PC-9 (cell line): ENCODE measurements at regions of chr19 and their contacts with region 1.

Region 1: DNA sequence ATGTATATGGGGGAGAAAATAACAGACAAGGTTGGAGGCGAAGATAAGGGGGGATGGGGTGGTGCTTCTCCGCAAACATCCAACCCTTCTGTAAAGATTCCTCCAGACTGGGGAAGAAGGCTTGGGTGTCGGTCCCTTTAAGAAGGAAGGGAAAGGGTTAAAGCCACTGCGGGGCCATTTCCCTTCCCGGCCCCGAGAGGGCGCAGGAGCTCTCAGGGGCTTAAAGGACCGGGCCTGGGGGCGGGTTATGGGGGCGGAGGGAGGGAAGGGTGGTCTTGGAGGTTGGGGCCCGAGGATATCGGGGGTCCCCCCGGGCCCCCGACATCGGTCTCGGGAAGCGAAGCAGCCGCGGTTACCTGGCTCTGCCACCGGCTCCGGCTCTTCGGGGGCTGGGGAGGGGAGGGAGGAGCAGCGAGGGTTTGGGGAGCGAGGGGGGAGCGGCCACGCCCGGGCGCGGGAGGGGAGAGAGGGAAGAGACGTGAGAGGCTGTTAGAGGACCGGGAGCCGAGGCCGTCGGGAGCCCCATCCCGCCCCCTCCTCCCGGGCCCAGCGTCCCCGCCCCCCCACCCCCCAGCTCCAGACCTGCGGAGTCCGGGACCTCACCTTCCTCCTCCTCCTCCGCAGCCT is 2.8 kb downstream of the TNNT1 start:
- DNase-seq: peak; percentile 59 to 83
- H3K4me3 ChIP-seq: peak overlapping the region; percentile 67
- H3K27ac ChIP-seq: no peak overlapping the region
- H3K4me1 ChIP-seq: peaks cover 20% of the 10 kb centered on the region; the same call in 1 of the 2 replicates
- H3K27me3 ChIP-seq: peaks cover 4% of the 10 kb centered on the region; the same call in 1 of the 2 replicates
- CTCF ChIP-seq: peak; percentile 98

Region 2: GRCh38 chr19:55160128-55160985 is 14.2 kb after region 1 on chr19:
- CTCF ChIA-PET with region 1: interaction called, 47 read pairs
- POLR2A ChIA-PET with region 1: interaction called, 4 read pairs
- intact Hi-C with region 1: loop called (anchors 1 kb)
- DNase-seq: peak; percentile 89 to 98
- H3K4me3 ChIP-seq: no peak overlapping the region
- H3K27ac ChIP-seq: no peak overlapping the region
- H3K4me1 ChIP-seq: peaks cover 21% of the 10 kb centered on the region
- H3K27me3 ChIP-seq: no peaks in the 10 kb centered on the region
- CTCF ChIP-seq: peak; percentile 98

Region 3: DNA sequence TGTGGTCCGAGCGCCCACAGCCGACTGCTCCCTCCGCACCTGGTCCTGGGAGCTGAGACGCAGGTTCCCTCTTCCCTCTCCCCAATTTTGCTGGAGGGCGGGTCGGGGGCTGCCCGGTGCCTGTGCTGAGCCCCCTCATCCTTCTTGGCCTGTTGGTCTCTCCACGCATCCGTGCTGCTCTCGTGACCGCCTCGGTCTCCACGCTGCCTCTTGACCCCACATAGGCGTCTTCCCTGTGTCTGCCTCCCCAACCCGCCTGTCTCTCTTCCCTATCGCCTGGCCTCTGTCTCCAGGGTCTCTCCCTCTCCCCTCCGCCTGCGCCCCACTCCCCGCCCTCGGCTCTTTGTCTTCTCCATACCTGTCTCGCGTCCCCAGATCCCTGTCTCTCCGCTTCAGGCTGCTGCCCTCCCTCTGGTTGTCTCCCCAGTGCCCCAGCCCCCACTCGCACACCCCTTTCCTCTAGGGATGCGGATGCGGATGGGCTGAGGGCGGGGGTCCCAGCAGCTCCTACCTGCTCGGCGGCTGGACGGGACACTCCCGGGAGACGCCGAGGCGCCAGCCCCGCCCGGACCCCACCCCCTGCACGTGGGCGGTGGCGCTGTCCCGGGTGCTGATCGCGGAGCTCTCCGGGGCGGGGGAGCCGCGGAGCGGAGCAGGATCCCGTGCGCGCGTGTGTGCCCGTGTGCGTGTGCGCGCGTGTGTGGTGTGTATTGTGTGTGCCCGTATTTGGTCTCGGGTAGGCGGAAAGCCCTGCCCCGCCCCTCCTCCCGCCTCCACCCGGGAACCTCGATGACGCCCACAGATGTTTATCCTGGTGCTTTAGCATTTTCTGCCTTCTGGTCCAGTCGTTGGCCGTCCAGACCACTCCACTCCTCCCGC is 33.7 kb after region 1 on chr19 and contains the start of gene SYT5:
- CTCF ChIA-PET with region 1: no interaction called
- POLR2A ChIA-PET with region 1: no interaction called
- intact Hi-C with region 1: no loop called
- DNase-seq: no peak
- H3K4me3 ChIP-seq: peak within 1 kb of the TSS; percentile 34; the same call in 1 of the 2 replicates
- H3K27ac ChIP-seq: no peak within 1 kb of the TSS
- H3K4me1 ChIP-seq: no peaks in the 10 kb centered on the region
- H3K27me3 ChIP-seq: no peaks in the 10 kb centered on the region
- CTCF ChIP-seq: no peak
- total RNA-seq, gene SYT5: 1.3 and 2.8 TPM in 2 replicates

Region 4: GRCh38 chr19:55216461-55217198 is 70.4 kb after region 1 on chr19:
- CTCF ChIA-PET with region 1: no interaction called
- POLR2A ChIA-PET with region 1: interaction called, 19 read pairs
- intact Hi-C with region 1: loop called (anchors 1 kb)
- DNase-seq: peak; percentile 95 to 100
- H3K4me3 ChIP-seq: peak overlapping the region; percentile 61
- H3K27ac ChIP-seq: peak overlapping the region; percentile 92
- H3K4me1 ChIP-seq: peaks cover 15% of the 10 kb centered on the region
- H3K27me3 ChIP-seq: no peaks in the 10 kb centered on the region
- CTCF ChIP-seq: no peak

Region 5: GRCh38 chr19:55227241-55228014 is 81.2 kb after region 1 on chr19:
- CTCF ChIA-PET with region 1: no interaction called
- POLR2A ChIA-PET with region 1: no interaction called
- intact Hi-C with region 1: no loop called
- DNase-seq: no peak
- H3K4me3 ChIP-seq: no peak overlapping the region
- H3K27ac ChIP-seq: no peak overlapping the region
- H3K4me1 ChIP-seq: no peaks in the 10 kb centered on the region
- H3K27me3 ChIP-seq: no peaks in the 10 kb centered on the region
- CTCF ChIP-seq: no peak

Region 6: GRCh38 chr19:55289117-55289796 is 143.1 kb after region 1 on chr19:
- CTCF ChIA-PET with region 1: interaction called, 4 read pairs
- POLR2A ChIA-PET with region 1: interaction called, 10 read pairs
- intact Hi-C with region 1: no loop called
- DNase-seq: no peak
- H3K4me3 ChIP-seq: no peak overlapping the region
- H3K27ac ChIP-seq: no peak overlapping the region
- H3K4me1 ChIP-seq: no peaks in the 10 kb centered on the region
- H3K27me3 ChIP-seq: no peaks in the 10 kb centered on the region
- CTCF ChIP-seq: no peak

Region 7: DNA sequence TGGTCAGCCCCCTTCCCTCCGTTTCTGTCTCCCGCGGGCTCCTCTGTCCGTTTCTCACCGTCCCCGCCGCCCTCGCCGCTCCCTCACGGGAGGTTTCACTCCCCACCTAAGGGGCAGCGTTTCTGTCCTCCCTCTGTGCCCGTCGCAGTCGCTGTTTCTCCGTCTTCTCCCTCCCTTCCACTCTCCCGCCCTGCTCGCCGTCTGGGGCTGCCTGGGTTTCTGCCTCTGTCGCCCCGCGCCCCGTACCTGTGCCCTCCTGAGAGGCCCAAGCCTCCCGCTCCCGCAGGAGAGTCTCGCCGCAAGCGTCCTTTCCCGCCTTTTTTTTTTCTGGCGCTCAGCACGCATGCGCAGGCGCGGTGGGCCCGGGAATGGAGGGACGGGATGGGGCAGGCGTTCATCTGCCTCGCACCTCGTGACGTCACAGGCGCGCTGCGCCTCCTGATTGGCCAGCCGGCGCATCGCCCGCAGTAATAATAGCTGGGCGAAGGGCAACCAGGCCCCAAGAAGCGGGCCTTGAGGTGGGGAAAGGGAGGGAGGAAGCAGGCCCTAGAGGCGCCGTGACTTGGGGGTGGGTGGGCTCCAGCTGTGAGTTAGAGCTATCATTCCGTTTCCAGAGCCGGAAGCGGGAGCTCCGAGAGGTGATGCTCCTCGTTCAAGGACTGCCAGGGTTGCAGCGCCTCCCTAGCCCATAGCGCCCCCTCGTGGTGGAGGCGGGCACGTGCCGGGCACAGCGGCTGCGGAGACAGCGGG is 357.5 kb after region 1 on chr19:
- CTCF ChIA-PET with region 1: interaction called, 6 read pairs
- POLR2A ChIA-PET with region 1: no interaction called
- intact Hi-C with region 1: loop called (anchors 1 kb)
- DNase-seq: peak; percentile 62 to 96
- H3K4me3 ChIP-seq: peak overlapping the region; percentile 27; the same call in 1 of the 2 replicates
- H3K27ac ChIP-seq: no peak overlapping the region
- H3K4me1 ChIP-seq: no peaks in the 10 kb centered on the region
- H3K27me3 ChIP-seq: peaks cover 27% of the 10 kb centered on the region
- CTCF ChIP-seq: peak; percentile 99

Region 8: DNA sequence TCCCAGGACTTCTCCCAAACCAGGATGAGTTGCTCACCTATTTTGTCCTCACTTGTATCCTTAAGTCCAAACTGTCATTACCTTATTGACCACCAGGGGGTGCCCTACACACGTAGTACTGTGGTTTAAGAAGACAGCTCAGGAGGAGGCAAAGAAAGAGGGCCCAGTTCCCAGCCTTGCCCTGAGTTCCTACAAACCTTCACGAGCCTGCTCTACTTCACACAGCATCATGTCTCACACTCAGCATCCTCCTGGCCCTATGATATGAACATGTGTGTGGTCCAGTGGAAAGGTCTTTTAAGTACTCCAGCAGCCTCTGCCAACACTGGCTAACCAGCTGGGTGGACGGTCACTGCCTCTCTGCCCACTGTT is 486.3 kb after region 1 on chr19:
- CTCF ChIA-PET with region 1: interaction called, 3 read pairs
- POLR2A ChIA-PET with region 1: no interaction called
- intact Hi-C with region 1: loop called (anchors 1 kb)
- DNase-seq: peak; percentile 84 to 89
- H3K4me3 ChIP-seq: no peak overlapping the region
- H3K27ac ChIP-seq: no peak overlapping the region
- H3K4me1 ChIP-seq: peaks cover 12% of the 10 kb centered on the region
- H3K27me3 ChIP-seq: no peaks in the 10 kb centered on the region
- CTCF ChIP-seq: peak; percentile 96